Natural killer cell (primary cell): ENCODE measurements at regions of chr13 and their contacts with region 1.

Region 1: GRCh38 chr13:99046851-99047250 is 69.0 kb upstream of the DOCK9 start:
- DNase-seq: no peak
- ATAC-seq: no peak
- H3K4me3 ChIP-seq: no peak overlapping the region
- H3K4me3 Mint-ChIP-seq: peak overlapping the region; percentile 81
- H3K27ac ChIP-seq: peak overlapping the region; percentile 70
- H3K27ac Mint-ChIP-seq: peak overlapping the region; percentile 90 to 91
- H3K4me1 ChIP-seq: peaks cover 77% of the 10 kb centered on the region
- H3K4me1 Mint-ChIP-seq: peaks cover 55 to 68% of the 10 kb centered on the region in 2 donors
- H3K27me3 ChIP-seq: no peaks in the 10 kb centered on the region
- H3K27me3 Mint-ChIP-seq: peaks cover 18 to 25% of the 10 kb centered on the region in 2 donors
- CTCF ChIP-seq: no peak

Region 2: GRCh38 chr13:98598043-98598442 is 448.8 kb before region 1 on chr13:
- intact Hi-C with region 1: no loop called
- DNase-seq: peak in 1 of 2 donors; percentile 11
- ATAC-seq: no peak
- H3K4me3 ChIP-seq: no peak overlapping the region
- H3K4me3 Mint-ChIP-seq: no peak overlapping the region
- H3K27ac ChIP-seq: no peak overlapping the region
- H3K27ac Mint-ChIP-seq: no peak overlapping the region
- H3K4me1 ChIP-seq: no peaks in the 10 kb centered on the region
- H3K4me1 Mint-ChIP-seq: peaks cover 0 to 5% of the 10 kb centered on the region in 2 donors
- H3K27me3 ChIP-seq: no peaks in the 10 kb centered on the region
- H3K27me3 Mint-ChIP-seq: peaks cover 23 to 29% of the 10 kb centered on the region in 2 donors
- CTCF ChIP-seq: no peak

Region 3: GRCh38 chr13:99004978-99005377 is 41.9 kb before region 1 on chr13:
- intact Hi-C with region 1: no loop called
- DNase-seq: no peak
- ATAC-seq: no peak
- H3K4me3 ChIP-seq: no peak overlapping the region
- H3K4me3 Mint-ChIP-seq: no peak overlapping the region
- H3K27ac ChIP-seq: no peak overlapping the region
- H3K27ac Mint-ChIP-seq: no peak overlapping the region
- H3K4me1 ChIP-seq: peaks cover 14% of the 10 kb centered on the region
- H3K4me1 Mint-ChIP-seq: peaks cover 41 to 42% of the 10 kb centered on the region in 2 donors
- H3K27me3 ChIP-seq: no peaks in the 10 kb centered on the region
- H3K27me3 Mint-ChIP-seq: no peaks in the 10 kb centered on the region
- CTCF ChIP-seq: no peak

Region 4: DNA sequence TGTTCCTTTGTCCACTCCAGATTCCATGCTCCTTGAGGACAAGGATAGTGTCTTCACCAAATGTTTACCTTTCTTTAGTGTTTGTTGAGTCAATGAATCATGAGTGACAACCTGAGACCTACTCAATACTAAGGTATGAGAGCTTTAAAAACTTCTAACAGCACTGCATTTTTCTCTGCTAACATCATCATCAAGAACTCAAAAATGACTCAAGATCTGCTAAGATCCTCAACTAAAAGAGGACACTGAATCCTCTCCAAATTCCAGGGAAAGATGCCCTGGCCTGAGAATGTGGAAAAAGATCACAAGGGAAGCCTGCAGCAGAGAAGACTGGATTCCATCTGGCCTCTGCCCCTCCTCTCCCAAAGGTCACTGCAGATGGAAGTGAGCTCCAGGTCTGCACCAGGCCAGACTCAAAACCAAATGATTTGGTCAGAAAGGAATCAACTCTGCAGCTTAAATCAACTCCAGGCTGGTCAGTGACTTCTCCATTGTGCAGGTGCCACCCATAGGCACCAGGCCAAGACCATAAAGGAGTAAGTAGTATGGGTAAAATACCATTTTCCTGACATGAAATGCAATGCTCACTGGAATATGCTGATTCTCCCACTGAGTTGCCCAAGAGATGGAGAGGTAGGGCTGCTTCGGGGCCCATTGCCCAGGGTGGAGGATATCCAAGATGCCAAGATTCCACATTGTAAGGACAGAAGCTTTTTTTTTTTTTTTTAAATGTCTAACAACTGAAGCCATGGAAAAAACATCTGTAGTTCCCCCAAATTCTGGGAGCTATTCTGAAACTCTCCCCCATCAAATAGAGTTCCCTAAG is 20.5 kb after region 1 on chr13:
- intact Hi-C with region 1: loop called (anchors 2 kb)
- DNase-seq: no peak
- ATAC-seq: no peak
- H3K4me3 ChIP-seq: no peak overlapping the region
- H3K4me3 Mint-ChIP-seq: peak overlapping the region; percentile 70
- H3K27ac ChIP-seq: no peak overlapping the region
- H3K27ac Mint-ChIP-seq: peak overlapping the region; percentile 37 to 70
- H3K4me1 ChIP-seq: peaks cover 13% of the 10 kb centered on the region
- H3K4me1 Mint-ChIP-seq: peaks cover 45 to 48% of the 10 kb centered on the region in 2 donors
- H3K27me3 ChIP-seq: no peaks in the 10 kb centered on the region
- H3K27me3 Mint-ChIP-seq: peaks cover 13 to 18% of the 10 kb centered on the region in 2 donors
- CTCF ChIP-seq: no peak

Region 5: GRCh38 chr13:99075268-99076191 is 28.7 kb after region 1 on chr13:
- intact Hi-C with region 1: loop called (anchors 1 kb)
- DNase-seq: peak in 1 of 2 donors; percentile 69
- ATAC-seq: peak; percentile 88 to 95 (median 94)
- H3K4me3 ChIP-seq: peak overlapping the region; percentile 7
- H3K4me3 Mint-ChIP-seq: peak overlapping the region; percentile 80
- H3K27ac ChIP-seq: peak overlapping the region; percentile 82
- H3K27ac Mint-ChIP-seq: peak overlapping the region; percentile 91 to 97
- H3K4me1 ChIP-seq: peaks cover 20% of the 10 kb centered on the region
- H3K4me1 Mint-ChIP-seq: peaks cover 33 to 48% of the 10 kb centered on the region in 2 donors
- H3K27me3 ChIP-seq: no peaks in the 10 kb centered on the region
- H3K27me3 Mint-ChIP-seq: no peaks in the 10 kb centered on the region
- CTCF ChIP-seq: peak; percentile 13

Region 6: DNA sequence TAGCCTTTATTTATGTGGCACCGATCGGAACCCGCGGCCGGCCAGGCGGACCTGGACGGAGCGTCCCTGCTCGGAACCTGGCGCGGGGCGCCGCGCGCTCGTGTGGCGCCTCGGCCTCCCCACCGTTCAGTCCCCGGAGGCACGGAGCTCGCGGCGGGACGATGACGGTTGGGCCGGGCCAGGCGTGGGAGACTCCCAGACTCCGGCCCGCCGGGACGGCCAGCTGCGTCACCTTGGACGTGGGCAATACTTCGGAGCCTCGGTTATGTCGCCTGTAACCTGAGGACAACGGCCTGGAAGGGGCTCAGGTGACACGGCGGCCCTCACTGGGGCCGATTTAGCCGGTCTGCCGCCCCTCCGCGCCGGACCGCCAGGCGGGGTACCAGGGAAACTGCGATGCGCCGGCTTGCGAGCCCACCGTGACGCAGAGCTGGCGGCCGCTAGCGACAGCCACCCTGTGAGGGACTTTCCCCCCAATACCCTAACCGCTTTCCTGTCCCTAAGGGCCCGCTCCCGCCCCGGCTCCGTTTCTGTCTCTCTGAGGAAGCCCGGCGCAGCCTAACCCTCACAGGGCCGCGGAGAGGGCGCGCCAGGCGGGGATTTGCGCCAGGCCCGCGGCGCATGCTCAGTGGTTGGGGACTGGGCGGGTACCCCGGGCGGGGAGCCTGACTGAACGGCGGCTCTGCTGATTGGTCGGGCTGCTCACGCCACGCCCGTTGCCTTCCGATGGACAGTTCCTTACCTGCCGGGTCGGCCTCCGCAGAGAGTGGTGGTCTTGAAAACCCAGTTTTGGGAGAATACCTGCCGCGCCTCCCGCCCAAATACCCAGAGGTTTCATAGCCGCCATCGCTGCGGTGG is 40.5 kb after region 1 on chr13:
- intact Hi-C with region 1: loop called (anchors 1 kb)
- DNase-seq: peak; percentile 86 to 96
- ATAC-seq: peak; percentile 68 to 84 (median 76)
- H3K4me3 ChIP-seq: peak overlapping the region; percentile 66
- H3K4me3 Mint-ChIP-seq: peak overlapping the region; percentile 98
- H3K27ac ChIP-seq: peak overlapping the region; percentile 87
- H3K27ac Mint-ChIP-seq: peak overlapping the region; percentile 95 to 100
- H3K4me1 ChIP-seq: peaks cover 28% of the 10 kb centered on the region
- H3K4me1 Mint-ChIP-seq: peaks cover 26 to 28% of the 10 kb centered on the region in 2 donors
- H3K27me3 ChIP-seq: no peaks in the 10 kb centered on the region
- H3K27me3 Mint-ChIP-seq: peaks cover 8 to 13% of the 10 kb centered on the region in 2 donors
- CTCF ChIP-seq: peak; percentile 38